ENCODE measurements at regions of chr2 and their contacts with region 1.

Region 1: DNA sequence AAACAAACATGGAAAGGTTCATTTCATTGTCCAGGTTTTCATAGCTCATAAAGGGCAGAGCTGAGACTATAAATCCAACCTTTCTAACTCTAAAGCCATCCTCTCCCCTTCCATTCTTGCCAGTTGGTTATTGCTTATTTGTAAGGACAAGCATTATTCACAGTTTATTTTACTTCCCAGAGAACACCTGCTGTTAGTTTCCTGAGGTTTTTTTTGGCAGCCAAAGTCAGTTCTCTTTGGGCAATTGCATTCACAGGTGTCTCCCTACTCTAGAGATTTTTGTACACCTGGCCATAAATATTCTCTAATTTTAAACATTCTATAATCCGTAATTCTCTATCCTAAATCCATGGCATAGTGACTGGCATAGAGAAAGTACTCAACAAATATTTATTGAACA is 87.3 kb upstream of the SPHKAP start:
- DNase-seq: no peak
- H3K4me3 ChIP-seq: no peak overlapping the region
- H3K27ac ChIP-seq: no peak overlapping the region
- H3K4me1 ChIP-seq: no peaks in the 10 kb centered on the region
- H3K27me3 ChIP-seq: no peaks in the 10 kb centered on the region
- CTCF ChIP-seq: no peak
- POLR2A ChIP-seq: no peak

Region 2: GRCh38 chr2:227179988-227180685 is 1088.6 kb before region 1 on chr2:
- intact Hi-C with region 1: loop called (anchors 5 kb)
- DNase-seq: no peak
- H3K4me3 ChIP-seq: no peak overlapping the region
- H3K27ac ChIP-seq: no peak overlapping the region
- H3K4me1 ChIP-seq: peaks cover 7% of the 10 kb centered on the region
- H3K27me3 ChIP-seq: no peaks in the 10 kb centered on the region
- CTCF ChIP-seq: no peak
- POLR2A ChIP-seq: no peak

Region 3: DNA sequence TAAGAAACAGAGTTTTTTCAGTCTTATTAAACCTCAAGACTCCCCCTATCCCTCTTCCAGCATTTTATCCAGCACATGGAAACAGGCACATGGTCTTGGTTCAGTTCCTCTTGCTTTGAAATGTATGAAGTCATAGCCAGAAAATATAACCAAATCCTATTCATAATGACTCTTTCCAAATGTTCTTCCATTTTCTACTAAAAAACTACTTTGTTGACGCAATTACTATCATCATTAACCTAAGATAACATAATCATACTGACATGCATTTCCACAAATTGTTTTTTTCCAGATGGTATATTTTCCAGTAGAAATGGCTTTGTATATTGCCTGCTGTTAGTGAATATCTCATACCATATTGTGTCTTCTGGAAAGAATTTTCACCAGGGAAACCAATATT is 741.1 kb after region 1 on chr2:
- intact Hi-C with region 1: no loop called
- DNase-seq: no peak
- H3K4me3 ChIP-seq: no peak overlapping the region
- H3K27ac ChIP-seq: no peak overlapping the region
- H3K4me1 ChIP-seq: no peaks in the 10 kb centered on the region
- H3K27me3 ChIP-seq: no peaks in the 10 kb centered on the region
- CTCF ChIP-seq: no peak
- POLR2A ChIP-seq: no peak

Measured in vagina (tissue), 2 donors.